ENCODE measurements at regions of chr17 and their contacts with region 1.

Region 1: DNA sequence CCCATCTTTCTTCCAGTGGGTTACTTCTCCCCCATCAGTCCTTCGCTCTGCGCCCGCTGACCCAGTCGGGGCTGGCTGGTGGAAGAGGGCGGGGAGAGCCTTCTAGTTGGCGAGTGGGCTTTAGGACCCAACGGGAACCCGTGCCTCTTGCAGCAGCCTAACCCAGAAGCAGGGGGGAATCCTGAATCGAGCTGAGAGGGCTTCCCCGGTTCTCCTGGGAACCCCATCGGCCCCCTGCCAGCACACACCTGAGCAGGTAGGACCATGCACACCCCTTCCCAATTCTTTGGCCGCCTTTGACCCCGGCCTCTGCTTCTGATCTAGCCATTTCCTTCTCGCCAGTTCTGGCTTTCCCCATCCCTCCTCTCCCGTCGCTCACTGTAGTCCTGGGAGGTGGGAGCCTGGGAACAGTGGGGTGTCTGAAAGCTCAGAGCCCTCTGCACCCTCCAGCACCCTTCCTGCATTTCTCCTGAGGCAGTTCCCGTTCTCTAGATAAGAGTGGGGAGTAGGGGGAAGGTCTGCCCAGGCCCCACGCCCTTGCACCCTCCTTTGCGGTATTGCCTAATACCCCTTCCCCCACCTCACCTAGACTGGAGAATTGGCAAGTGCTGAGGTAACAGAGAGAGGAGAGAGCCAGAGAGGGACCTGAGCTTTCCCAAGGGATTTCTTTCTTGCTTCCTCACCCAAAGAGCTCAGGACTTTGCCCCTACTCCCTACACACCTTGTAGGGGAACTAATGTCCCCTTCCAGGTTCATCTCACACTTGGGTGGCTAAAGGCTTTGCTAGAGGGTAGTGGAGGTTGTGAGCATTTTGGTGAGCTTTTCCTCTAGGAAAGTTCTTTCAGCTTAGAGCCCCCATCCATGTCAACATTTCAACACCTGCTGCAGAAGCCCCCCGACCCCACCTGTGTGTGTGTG is at the start of gene RARA:
- DNase-seq: no peak
- ATAC-seq: peak; percentile 56
- H3K4me3 ChIP-seq: peak within 1 kb of the TSS; percentile 51
- H3K4me3 Mint-ChIP-seq: peak within 1 kb of the TSS in 3 of 10 donors; percentile 4 to 51 (median 5)
- H3K27ac ChIP-seq: no peak within 1 kb of the TSS
- H3K27ac Mint-ChIP-seq: no peak within 1 kb of the TSS
- H3K4me1 ChIP-seq: peaks cover 36 to 58% of the 10 kb centered on the region in 2 donors
- H3K4me1 Mint-ChIP-seq: peaks cover 0 to 39% (median 23%) of the 10 kb centered on the region in 7 donors
- H3K27me3 ChIP-seq: no peaks in the 10 kb centered on the region
- H3K27me3 Mint-ChIP-seq: no peaks in the 10 kb centered on the region
- total RNA-seq, gene RARA: 40.0 to 115 (median 43.8) TPM

Region 2: DNA sequence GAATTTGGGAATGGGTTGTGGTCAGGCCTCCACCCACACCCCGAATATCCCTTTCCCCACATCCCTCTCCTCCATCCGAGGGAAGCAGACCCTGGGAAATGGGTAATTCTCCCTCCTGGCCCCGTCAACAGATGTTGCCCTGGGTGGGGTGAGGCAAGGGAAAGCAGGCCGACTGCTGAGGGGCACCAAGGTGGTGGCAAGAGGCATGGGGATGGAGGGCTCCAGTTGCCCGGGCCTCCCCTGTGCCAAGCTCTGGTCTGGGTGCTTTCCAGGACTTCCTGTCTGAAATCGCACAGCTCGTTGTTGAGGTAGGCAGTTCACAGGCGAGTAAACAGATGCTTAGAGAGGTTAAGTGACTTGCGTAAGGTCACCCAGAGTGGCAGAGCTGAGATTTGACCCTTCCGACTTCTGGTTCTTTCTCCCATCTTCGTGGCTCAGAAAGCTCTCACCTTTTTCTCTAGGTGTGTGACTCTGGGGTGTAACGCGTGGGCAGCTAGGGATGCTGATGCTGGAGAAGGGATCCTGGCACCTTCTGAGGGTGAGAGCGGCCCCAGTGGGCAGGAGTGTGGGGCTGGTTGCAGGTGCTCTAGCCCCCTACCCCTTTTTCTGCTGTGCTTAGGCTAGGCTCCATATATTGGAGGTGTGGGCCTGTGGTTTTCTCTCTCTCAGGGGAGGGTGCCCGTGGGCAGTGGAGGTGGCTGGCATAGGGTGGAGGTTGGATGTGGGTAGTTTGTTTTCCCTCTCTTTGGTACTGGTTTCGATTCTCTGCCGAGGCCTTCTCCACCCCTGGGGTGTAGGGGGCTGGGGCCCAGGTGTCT is 16.9 kb after region 1 on chr17:
- CTCF ChIA-PET with region 1: interaction called, 26 read pairs
- POLR2A ChIA-PET with region 1: interaction called, 742 read pairs
- intact Hi-C with region 1: no loop called
- DNase-seq: peak in 7 of 9 donors; percentile 52 to 73 (median 67)
- ATAC-seq: peak; percentile 23
- H3K4me3 ChIP-seq: peak overlapping the region; percentile 47
- H3K4me3 Mint-ChIP-seq: peak overlapping the region; percentile 80 to 97 (median 88)
- H3K27ac ChIP-seq: peak overlapping the region; percentile 91
- H3K27ac Mint-ChIP-seq: peak overlapping the region; percentile 93 to 100 (median 99)
- H3K4me1 ChIP-seq: peaks cover 83 to 87% of the 10 kb centered on the region in 2 donors
- H3K4me1 Mint-ChIP-seq: peaks cover 68 to 97% (median 93%) of the 10 kb centered on the region in 7 donors
- H3K27me3 ChIP-seq: no peaks in the 10 kb centered on the region
- H3K27me3 Mint-ChIP-seq: peaks cover 0 to 9% (median 0%) of the 10 kb centered on the region in 5 donors

Region 3: GRCh38 chr17:40349920-40350909 is 40.9 kb after region 1 on chr17:
- CTCF ChIA-PET with region 1: interaction called, 233 read pairs
- POLR2A ChIA-PET with region 1: interaction called, 742 read pairs
- intact Hi-C with region 1: no loop called
- DNase-seq: no peak
- ATAC-seq: no peak
- H3K4me3 ChIP-seq: no peak overlapping the region
- H3K4me3 Mint-ChIP-seq: no peak overlapping the region
- H3K27ac ChIP-seq: no peak overlapping the region
- H3K27ac Mint-ChIP-seq: peak overlapping the region in 6 of 9 donors; percentile 25 to 90 (median 62)
- H3K4me1 ChIP-seq: peaks cover 26 to 29% of the 10 kb centered on the region in 2 donors
- H3K4me1 Mint-ChIP-seq: peaks cover 12 to 58% (median 41%) of the 10 kb centered on the region in 7 donors
- H3K27me3 ChIP-seq: no peaks in the 10 kb centered on the region
- H3K27me3 Mint-ChIP-seq: no peaks in the 10 kb centered on the region

Region 4: GRCh38 chr17:40779181-40779909 is 470.1 kb after region 1 on chr17:
- CTCF ChIA-PET with region 1: no interaction called
- POLR2A ChIA-PET with region 1: no interaction called
- intact Hi-C with region 1: no loop called
- DNase-seq: peak in 5 of 9 donors; percentile 8 to 28 (median 17)
- ATAC-seq: peak; percentile 47
- H3K4me3 ChIP-seq: no peak overlapping the region
- H3K4me3 Mint-ChIP-seq: peak overlapping the region; percentile 5 to 73 (median 66)
- H3K27ac ChIP-seq: no peak overlapping the region
- H3K27ac Mint-ChIP-seq: no peak overlapping the region
- H3K4me1 ChIP-seq: no peaks in the 10 kb centered on the region
- H3K4me1 Mint-ChIP-seq: peaks cover 0 to 11% (median 2%) of the 10 kb centered on the region in 7 donors
- H3K27me3 ChIP-seq: peaks cover 0 to 3% of the 10 kb centered on the region in 2 donors
- H3K27me3 Mint-ChIP-seq: peaks cover 52 to 73% (median 59%) of the 10 kb centered on the region in 5 donors